ENCODE measurements at regions of chr2 and their contacts with region 1.

Region 1: GRCh38 chr2:65040400-65041261 is 15.6 kb upstream of the CEP68 start:
- DNase-seq: peak; percentile 48 to 86 (median 77)
- ATAC-seq: peak; percentile 100
- H3K4me3 ChIP-seq: no peak overlapping the region
- H3K4me3 Mint-ChIP-seq: no peak overlapping the region
- H3K27ac ChIP-seq: no peak overlapping the region
- H3K27ac Mint-ChIP-seq: no peak overlapping the region
- H3K4me1 ChIP-seq: peaks cover 5% of the 10 kb centered on the region
- H3K4me1 Mint-ChIP-seq: peaks cover 11% of the 10 kb centered on the region
- H3K27me3 ChIP-seq: no peaks in the 10 kb centered on the region
- H3K27me3 Mint-ChIP-seq: no peaks in the 10 kb centered on the region
- CTCF ChIP-seq: peak; percentile 83

Region 2: DNA sequence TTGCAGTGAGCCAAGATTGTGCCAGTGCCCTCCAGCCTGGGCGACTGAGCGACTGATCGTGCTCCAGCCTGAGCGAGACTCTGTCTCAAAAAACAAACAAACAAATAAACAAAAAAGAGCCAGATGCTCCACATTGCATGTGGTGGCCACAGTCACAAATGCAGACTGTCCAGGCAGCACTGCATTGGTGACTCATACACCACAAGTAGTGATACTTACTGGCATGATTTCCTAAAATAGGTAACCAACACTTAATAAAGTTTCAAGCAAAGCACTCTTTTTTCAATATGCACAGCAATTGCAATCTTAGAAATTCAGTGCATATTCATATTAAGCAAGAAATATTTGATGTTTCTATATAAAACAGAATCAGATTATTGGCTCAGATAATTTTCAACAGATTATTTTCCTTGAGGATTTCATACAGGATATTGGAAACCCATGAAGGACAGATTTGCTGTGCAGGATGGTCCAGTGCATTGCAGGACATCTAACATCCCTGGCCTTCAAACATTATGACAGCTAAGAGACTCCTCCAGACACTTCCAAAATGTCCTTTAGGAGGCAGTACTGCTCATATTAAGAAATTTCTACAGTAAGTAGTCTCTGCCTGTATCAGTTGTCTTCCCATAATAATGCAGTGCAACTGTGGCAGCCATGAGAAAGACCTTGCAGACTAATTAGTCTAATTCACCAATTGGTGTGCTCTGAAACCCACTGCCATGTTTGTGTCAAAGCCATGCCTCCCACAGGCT is 61.9 kb before region 1 on chr2:
- CTCF ChIA-PET with region 1: interaction called, 3 read pairs
- POLR2A ChIA-PET with region 1: no interaction called
- intact Hi-C with region 1: loop called in 1 of 2 experiments (anchors 2 kb)
- DNase-seq: peak in 2 of 9 experiments; percentile 33 to 48
- ATAC-seq: peak; percentile 40
- H3K4me3 ChIP-seq: no peak overlapping the region
- H3K4me3 Mint-ChIP-seq: no peak overlapping the region
- H3K27ac ChIP-seq: no peak overlapping the region
- H3K27ac Mint-ChIP-seq: no peak overlapping the region
- H3K4me1 ChIP-seq: no peaks in the 10 kb centered on the region
- H3K4me1 Mint-ChIP-seq: no peaks in the 10 kb centered on the region
- H3K27me3 ChIP-seq: no peaks in the 10 kb centered on the region
- H3K27me3 Mint-ChIP-seq: no peaks in the 10 kb centered on the region
- CTCF ChIP-seq: peak; percentile 17